ENCODE measurements at regions of chr1 and their contacts with region 1.

Region 1: DNA sequence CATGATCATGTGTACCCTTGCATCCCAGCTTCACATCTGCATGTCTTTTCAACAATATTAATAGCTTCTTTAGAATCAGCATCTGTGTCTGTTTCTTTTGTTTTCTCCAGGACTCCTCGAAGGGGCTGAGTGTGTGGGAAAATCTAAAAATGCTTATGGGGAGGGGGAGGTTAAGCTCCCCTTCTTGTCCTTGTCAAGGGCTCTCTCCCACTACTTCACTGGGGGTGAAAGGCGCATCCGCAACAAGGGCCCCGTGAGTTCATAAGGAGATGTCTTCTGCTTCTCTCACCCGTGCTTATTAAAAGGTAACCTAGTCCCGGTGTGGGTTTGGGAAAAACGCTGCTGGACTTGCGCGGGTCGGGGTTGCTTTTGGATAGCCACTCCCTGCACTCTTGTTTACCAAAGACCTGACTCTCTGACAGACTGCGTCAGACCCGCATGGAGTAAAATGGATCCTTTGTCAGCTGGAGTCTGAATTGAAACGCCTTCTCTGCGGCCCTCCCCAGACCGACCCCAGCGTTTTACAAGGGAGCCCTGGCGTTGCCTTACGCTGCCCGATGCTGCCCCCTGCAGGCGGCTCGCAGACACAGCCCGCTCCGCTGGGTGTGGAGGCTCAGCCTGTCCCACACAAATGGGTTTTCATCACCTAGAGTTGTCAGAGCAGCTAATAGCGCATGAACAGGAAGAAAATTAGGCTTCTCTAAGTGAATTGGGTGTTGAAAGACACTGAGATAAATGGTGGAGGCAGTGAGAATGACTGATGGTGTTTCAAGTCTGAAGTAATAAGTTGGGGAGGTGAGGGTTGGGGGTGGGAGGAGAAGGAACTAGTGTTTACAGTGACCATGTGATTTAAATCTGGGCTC is 53.8 kb downstream of the IER5 start:
- DNase-seq: peak; percentile 88 to 92 (median 91)
- ATAC-seq: peak; percentile 95
- H3K4me3 ChIP-seq: no peak overlapping the region
- H3K4me1 ChIP-seq: peaks cover 11% of the 10 kb centered on the region
- CTCF ChIP-seq: peak; percentile 86

Region 2: GRCh38 chr1:180778782-180779398 is 363.4 kb before region 1 on chr1:
- intact Hi-C with region 1: no loop called
- DNase-seq: peak in 1 of 3 donors; percentile 40
- ATAC-seq: peak; percentile 55
- H3K4me3 ChIP-seq: no peak overlapping the region
- H3K4me1 ChIP-seq: no peaks in the 10 kb centered on the region
- CTCF ChIP-seq: peak; percentile 13

Region 3: GRCh38 chr1:181038399-181038873 is 103.9 kb before region 1 on chr1:
- intact Hi-C with region 1: loop called (anchors 5 kb)
- DNase-seq: peak in 2 of 3 donors; percentile 53 to 56
- ATAC-seq: peak; percentile 67
- H3K4me3 ChIP-seq: no peak overlapping the region
- H3K4me1 ChIP-seq: peaks cover 8% of the 10 kb centered on the region
- CTCF ChIP-seq: peak; percentile 45

Region 4: DNA sequence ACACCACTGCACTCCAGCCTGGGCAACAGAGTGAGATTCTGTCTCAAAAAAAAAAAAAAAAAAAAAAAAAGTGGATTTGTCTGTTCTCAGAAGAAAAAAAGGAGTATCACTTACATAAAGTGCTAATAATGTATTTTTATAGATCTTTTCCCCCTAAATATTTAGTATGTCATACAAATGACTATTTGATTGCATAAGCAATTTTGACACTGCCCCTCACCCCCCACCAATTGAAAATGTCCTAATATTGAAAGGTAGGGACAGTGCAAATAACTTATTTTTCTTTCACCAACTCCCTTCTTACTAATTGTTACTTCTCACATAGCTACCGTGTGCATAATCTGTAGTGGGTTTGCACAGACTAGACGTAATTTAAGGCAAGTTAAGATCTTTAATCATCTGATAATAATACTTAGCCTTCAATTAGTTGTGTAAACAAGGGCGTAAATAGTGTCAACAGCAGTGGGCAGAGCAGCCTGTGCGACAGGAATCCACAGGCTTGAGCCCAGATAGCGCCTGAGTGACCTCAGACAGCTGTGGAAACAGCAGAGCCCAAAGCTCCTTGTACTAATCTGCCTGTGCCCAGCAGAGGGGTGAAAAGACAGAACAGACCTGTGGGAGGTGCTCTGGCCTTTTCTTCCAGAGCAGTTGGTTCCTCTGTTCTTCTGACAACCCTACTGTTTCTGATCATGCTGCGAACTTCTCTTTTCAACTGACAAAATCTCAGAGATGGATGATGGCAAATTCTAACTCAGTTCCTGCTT is 58.3 kb before region 1 on chr1:
- intact Hi-C with region 1: loop called (anchors 2 to 5 kb)
- DNase-seq: peak in 2 of 3 donors; percentile 57 to 74
- ATAC-seq: peak; percentile 48
- H3K4me3 ChIP-seq: no peak overlapping the region
- H3K4me1 ChIP-seq: peaks cover 13% of the 10 kb centered on the region
- CTCF ChIP-seq: peak; percentile 22